Activated naive CD4-positive, alpha-beta T cell treated with anti-CD3 and anti-CD28 coated beads for 36 hours (primary cell): ENCODE measurements at regions of chr12 and their contacts with region 1.

Region 1: DNA sequence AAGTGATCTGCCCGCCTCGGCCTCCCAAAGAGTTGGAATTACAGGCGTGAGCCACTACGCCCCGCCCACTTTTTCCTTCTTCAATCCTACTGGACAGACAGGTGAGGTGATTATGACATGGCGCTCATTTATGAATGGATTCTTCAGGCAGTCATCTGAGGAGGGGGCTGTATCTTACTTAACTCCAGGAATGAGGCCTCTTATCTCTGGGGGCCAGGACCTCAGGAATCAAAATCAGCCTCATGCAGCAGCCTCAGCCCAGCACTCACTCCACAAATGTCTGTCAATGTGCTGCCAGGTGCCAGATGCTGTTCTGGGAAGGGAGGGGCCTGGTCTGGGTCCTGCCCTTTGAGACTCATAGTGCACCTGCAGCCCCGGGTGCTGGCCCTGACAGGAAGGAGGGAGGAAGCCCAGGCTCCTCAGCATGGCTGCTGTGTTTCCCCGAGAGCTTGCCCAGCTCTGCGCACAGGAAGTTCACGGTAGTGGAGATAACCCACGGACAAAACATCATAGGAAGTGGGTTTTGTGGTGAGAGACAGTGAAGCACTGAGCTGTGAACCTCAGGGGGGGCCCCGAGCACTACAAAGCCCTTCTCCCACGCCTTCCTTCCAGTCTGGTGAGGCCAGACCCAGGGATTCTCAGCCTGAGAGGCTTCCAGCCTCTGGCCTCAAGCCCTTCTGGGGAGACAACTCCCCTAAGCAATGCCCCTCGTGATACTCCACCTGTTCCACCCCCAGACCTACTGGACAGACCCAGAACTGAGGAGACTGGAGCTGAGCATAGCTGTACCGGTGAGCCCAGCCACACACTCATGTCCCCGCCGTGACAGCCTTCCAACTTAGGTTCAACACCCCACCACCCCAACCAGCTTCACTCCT is 22.3 kb downstream of the GALNT6 start:
- DNase-seq: peak; percentile 97
- H3K4me3 Mint-ChIP-seq: peak overlapping the region; percentile 37
- H3K27ac Mint-ChIP-seq: peak overlapping the region; percentile 86
- H3K4me1 Mint-ChIP-seq: peaks cover 41% of the 10 kb centered on the region
- H3K27me3 Mint-ChIP-seq: no peaks in the 10 kb centered on the region

Region 2: DNA sequence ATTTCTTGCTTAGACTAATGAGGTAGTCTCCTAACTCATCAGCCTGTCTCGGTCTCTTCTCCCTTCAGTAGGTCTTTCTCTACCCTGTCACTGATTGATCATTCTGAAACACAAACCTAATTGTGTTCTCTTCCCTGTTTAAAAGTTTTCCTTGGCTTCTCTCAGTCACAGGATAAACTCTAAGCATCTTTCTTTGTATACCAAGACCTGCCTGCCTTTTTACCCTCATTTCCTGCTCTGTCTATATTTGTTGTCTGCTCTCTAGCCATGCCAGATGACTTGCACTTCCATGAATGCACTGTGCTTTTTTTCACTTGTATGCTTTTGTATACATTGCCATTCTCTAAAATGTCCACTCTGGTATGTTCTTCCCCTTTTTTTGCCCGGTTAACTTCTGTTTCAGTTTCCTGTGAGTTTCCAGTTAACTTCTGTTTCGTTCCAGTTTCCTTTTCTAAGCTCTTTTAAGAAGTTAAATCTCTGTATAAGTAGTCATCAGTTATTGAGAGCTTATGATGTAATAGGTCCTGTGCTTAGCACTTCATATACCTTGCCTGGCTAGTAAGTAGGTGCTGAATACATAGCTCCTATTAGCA is 851.3 kb before region 1 on chr12:
- CTCF ChIA-PET with region 1: no interaction called
- intact Hi-C with region 1: loop called (anchors 5 kb)
- DNase-seq: peak; percentile 23
- H3K4me3 Mint-ChIP-seq: no peak overlapping the region
- H3K27ac Mint-ChIP-seq: no peak overlapping the region
- H3K4me1 Mint-ChIP-seq: peaks cover 69% of the 10 kb centered on the region
- H3K27me3 Mint-ChIP-seq: no peaks in the 10 kb centered on the region

Region 3: GRCh38 chr12:51357374-51358047 is 11.4 kb before region 1 on chr12:
- CTCF ChIA-PET with region 1: interaction called, 6 read pairs
- intact Hi-C with region 1: loop called (anchors 1 kb)
- DNase-seq: peak; percentile 74
- H3K4me3 Mint-ChIP-seq: no peak overlapping the region
- H3K27ac Mint-ChIP-seq: peak overlapping the region; percentile 41
- H3K4me1 Mint-ChIP-seq: peaks cover 15% of the 10 kb centered on the region
- H3K27me3 Mint-ChIP-seq: no peaks in the 10 kb centered on the region

Region 4: DNA sequence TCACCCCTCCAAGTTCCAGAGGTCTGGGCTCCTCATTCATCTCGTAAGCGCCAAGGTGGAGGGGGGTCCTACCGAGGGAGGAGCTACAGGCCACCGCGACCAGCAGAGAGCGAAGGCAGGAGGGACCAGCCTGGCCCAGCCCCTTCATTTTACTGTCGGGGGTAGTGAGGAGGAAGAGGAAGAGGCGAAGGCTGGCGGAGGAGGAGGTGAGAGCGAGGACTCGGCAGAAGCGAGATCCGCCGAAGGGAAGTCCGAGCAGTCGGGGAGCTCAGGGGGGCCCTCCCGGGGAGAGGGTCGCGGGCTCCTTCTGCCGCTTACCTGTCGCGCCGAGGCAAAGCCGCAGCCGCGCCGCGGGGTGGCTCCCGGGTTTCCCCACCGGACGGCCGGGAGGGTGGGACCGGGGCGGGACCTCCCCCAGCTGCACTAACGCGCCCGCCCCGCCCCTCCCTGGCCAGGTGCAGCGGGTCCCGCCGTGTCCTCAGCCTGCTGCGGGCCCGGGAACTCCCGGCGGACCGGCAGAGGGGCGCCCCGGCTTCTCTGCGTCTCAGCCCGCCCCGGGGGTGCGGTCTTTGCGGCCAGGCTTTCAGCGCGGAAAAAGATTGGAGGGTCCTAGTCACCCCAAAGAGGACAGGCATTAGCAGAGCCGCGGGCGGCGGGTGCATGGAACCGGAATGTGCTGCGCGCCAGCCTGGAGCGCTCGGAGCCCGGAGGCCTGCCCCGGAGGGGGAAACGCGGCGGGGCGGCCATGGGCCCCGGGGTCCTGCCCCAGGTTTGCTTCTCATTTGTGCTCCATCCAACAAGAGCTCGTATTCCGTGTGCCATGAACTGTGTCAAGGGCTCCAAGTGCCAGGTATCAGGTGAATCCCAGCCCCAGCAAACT is 22.6 kb after region 1 on chr12 and contains the start of gene GALNT6:
- CTCF ChIA-PET with region 1: interaction called, 3 read pairs
- intact Hi-C with region 1: loop called (anchors 1 kb)
- DNase-seq: peak; percentile 68
- H3K4me3 Mint-ChIP-seq: peak within 1 kb of the TSS; percentile 83
- H3K27ac Mint-ChIP-seq: peak within 1 kb of the TSS; percentile 38
- H3K4me1 Mint-ChIP-seq: peaks cover 71% of the 10 kb centered on the region
- H3K27me3 Mint-ChIP-seq: no peaks in the 10 kb centered on the region
- total RNA-seq, gene GALNT6: 5.1 to 5.4 TPM

Region 5: DNA sequence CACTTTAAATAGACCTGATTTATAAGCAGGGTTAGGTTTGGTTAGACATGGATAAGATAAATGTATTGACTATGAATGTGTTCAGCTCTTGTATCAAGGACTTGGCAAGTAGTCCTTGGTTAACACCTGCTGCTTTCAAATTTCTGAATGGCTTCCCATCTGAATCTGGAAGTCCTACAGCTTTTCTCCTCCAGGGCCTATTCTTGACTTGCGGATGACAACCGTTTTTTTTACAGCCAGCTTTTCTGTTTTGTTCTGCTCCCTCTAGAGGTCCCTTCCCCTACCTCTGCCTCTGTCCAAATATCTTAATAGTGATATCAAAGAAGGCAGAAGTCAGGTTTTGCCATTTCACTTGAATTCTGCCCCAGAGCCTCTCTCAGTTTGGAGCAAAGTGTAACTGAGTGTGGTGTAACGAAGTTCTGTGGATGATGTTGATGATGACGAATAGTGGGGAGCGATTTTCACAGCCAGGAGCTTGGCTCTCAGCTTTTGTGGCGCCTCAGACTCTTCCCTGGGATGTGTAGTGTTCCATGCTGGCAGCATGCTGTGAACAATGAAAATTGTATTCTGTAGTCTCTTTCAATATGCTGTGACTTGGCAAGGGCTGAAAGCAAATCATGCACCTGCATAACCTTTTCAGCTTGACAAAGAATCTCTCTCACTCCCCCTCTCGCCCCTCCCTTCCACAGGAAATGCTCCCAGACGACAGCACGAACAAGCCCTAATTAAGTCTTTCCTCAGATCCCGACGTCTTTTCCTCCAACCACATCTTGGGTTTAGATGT is 50.7 kb after region 1 on chr12:
- CTCF ChIA-PET with region 1: interaction called, 3 read pairs
- intact Hi-C with region 1: loop called (anchors 2 kb)
- DNase-seq: no peak
- H3K4me3 Mint-ChIP-seq: no peak overlapping the region
- H3K27ac Mint-ChIP-seq: no peak overlapping the region
- H3K4me1 Mint-ChIP-seq: peaks cover 9% of the 10 kb centered on the region
- H3K27me3 Mint-ChIP-seq: no peaks in the 10 kb centered on the region

Region 6: GRCh38 chr12:51482929-51483697 is 114.2 kb after region 1 on chr12:
- CTCF ChIA-PET with region 1: no interaction called
- intact Hi-C with region 1: loop called (anchors 1 kb)
- DNase-seq: peak; percentile 50
- H3K4me3 Mint-ChIP-seq: peak overlapping the region; percentile 62
- H3K27ac Mint-ChIP-seq: peak overlapping the region; percentile 88
- H3K4me1 Mint-ChIP-seq: peaks cover 40% of the 10 kb centered on the region
- H3K27me3 Mint-ChIP-seq: no peaks in the 10 kb centered on the region

Region 7: DNA sequence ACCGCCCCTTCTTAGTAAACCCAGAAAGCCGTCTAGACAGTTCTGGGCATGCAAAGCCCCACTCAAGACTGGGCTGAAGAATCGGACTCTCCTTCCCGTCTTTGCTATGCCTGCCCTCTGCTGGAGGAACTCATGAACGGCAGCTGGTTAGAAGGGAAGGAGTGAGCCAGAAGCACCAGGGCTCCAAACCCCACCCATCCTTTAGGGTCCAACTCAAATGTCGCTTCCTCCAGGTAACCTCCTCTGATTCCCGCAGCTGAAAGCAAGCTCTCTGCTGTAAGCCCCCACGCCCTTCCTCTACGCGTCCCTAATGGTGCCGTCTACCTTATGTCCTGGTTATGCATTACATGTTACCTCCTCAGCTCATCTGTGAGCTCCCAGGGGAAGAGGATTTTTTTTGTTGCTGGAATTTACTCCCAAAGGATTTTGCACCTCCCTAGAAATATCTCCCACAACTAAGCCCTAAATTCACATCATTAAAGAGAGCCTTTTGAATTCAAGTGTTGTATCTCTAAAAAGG is 163.2 kb after region 1 on chr12:
- CTCF ChIA-PET with region 1: interaction called, 6 read pairs
- intact Hi-C with region 1: loop called (anchors 2 kb)
- DNase-seq: peak; percentile 87
- H3K4me3 Mint-ChIP-seq: no peak overlapping the region
- H3K27ac Mint-ChIP-seq: no peak overlapping the region
- H3K4me1 Mint-ChIP-seq: peaks cover 5% of the 10 kb centered on the region
- H3K27me3 Mint-ChIP-seq: peaks cover 2% of the 10 kb centered on the region